ENCODE measurements at regions of chr15 and their contacts with region 1.

Region 1: GRCh38 chr15:88904624-88905327 is 8.4 kb downstream of the MFGE8 start:
- DNase-seq: peak; percentile 71 to 81
- H3K4me3 ChIP-seq: peak overlapping the region in 1 of 3 donors; percentile 2
- H3K27ac ChIP-seq: peak overlapping the region; percentile 45 to 48
- H3K4me1 ChIP-seq: peaks cover 0 to 15% of the 10 kb centered on the region in 2 donors
- H3K27me3 ChIP-seq: no peaks in the 10 kb centered on the region
- CTCF ChIP-seq: peak; percentile 93 to 98 (median 94)
- POLR2A ChIP-seq: no peak

Region 2: DNA sequence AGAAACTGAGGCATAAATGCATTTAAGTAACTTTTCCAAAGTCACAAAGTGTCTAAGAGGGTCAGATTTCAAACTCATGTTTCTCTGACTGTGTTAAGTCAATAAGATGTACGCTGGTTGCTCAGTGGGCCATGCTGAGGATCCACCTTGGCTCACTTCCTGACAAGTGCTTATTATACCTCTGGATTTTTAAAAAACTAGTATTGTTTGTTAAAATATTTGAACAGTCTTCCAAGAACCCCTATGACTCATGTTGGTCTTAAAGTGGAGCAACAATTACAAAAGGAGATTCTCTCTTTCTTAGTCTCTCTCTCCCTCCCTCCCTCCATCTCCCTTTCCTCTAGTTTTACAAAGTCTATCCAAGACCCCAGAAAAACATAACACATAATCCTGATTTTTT is 1774.9 kb before region 1 on chr15:
- intact Hi-C with region 1: no loop called
- DNase-seq: no peak
- H3K4me3 ChIP-seq: no peak overlapping the region
- H3K27ac ChIP-seq: no peak overlapping the region
- H3K4me1 ChIP-seq: no peaks in the 10 kb centered on the region
- H3K27me3 ChIP-seq: no peaks in the 10 kb centered on the region
- CTCF ChIP-seq: no peak
- POLR2A ChIP-seq: no peak

Region 3: GRCh38 chr15:88878720-88879184 is 26.0 kb before region 1 on chr15:
- intact Hi-C with region 1: no loop called
- DNase-seq: no peak
- H3K4me3 ChIP-seq: no peak overlapping the region
- H3K27ac ChIP-seq: no peak overlapping the region
- H3K4me1 ChIP-seq: no peaks in the 10 kb centered on the region
- H3K27me3 ChIP-seq: no peaks in the 10 kb centered on the region
- CTCF ChIP-seq: no peak
- POLR2A ChIP-seq: no peak

Region 4: DNA sequence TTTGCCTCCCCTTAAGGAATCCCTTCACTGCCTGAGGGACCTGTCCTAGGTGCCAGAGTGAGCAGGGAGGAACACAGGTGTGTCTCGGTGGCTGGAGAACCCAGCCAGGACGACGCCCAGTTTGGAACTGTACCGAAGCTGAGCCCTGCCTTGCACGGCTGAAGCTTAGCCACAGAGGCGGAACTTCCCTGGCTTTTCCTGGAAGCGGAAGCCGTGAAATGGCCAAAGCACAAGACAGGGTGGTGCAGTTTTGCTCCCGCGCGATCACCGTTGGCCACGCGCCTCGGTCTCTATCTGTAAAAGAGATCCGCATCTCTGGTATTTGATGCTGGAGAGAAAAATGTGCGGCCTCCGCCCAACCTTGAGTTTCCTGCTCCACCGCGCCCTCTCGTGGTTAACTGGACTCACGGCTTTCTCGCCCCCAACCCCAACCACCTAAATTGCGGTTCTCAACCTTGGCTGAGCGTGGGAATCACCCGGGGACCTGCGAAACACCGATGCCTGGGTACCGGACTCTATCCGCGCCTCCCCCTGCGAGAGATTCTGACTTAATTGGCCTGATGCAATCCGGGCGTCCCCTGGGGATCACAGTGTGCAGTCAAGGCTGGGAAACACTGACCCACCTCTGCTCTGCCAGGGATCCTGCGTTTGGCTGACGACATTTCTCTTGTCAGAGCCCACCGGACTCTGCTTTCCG is 112.7 kb after region 1 on chr15:
- intact Hi-C with region 1: loop called (anchors 5 kb)
- DNase-seq: peak; percentile 73 to 79
- H3K4me3 ChIP-seq: peak overlapping the region in 2 of 3 donors; percentile 30 to 63
- H3K27ac ChIP-seq: peak overlapping the region; percentile 85 to 89
- H3K4me1 ChIP-seq: no peaks in the 10 kb centered on the region
- H3K27me3 ChIP-seq: no peaks in the 10 kb centered on the region
- CTCF ChIP-seq: peak; percentile 62 to 73 (median 71)
- POLR2A ChIP-seq: no peak

Region 5: GRCh38 chr15:89167267-89168176 is 262.7 kb after region 1 on chr15:
- intact Hi-C with region 1: loop called (anchors 10 kb)
- DNase-seq: peak in 1 of 2 donors; percentile 57
- H3K4me3 ChIP-seq: no peak overlapping the region
- H3K27ac ChIP-seq: peak overlapping the region; percentile 34 to 74
- H3K4me1 ChIP-seq: peaks cover 0 to 12% of the 10 kb centered on the region in 2 donors
- H3K27me3 ChIP-seq: no peaks in the 10 kb centered on the region
- CTCF ChIP-seq: no peak
- POLR2A ChIP-seq: no peak

Measured in breast epithelium (tissue), 4 donors.